Right ventricle myocardium superior (tissue), 1 donor: ENCODE measurements at regions of chr6 and their contacts with region 1.

Region 1: GRCh38 chr6:168117942-168118341 is 38.9 kb upstream of the FRMD1 start:
- DNase-seq: no peak
- ATAC-seq: no peak

Region 2: GRCh38 chr6:168060521-168060931 is 57.4 kb before region 1 on chr6:
- intact Hi-C with region 1: loop called (anchors 5 kb)
- DNase-seq: peak; percentile 78
- ATAC-seq: peak; percentile 84